ENCODE measurements at regions of chr11 and their contacts with region 1.

Region 1: DNA sequence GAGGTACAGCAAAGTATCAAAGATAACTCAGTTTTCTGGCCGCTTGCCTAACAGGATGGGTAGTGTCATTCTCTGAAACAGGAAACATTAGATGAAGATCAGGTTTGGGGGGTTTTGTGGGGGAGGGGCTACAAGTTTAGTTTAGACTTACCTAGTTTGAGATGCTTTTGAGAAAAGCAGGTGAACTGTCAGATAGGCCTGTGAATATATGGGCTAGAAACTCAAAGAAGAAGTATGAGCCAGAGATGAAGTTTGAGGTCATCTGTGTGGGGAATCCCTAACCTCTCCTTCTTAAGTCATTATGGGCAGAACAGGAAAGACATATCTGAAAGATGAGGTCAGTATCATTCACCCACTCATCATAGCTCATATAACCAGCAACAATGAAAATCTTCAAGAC is 11.9 kb downstream of the HOATZ start:
- DNase-seq: peak in 5 of 9 experiments; percentile 23 to 79 (median 45)
- ATAC-seq: peak; percentile 64
- H3K4me3 ChIP-seq: no peak overlapping the region
- H3K4me3 Mint-ChIP-seq: no peak overlapping the region
- H3K27ac ChIP-seq: no peak overlapping the region
- H3K27ac Mint-ChIP-seq: peak overlapping the region; percentile 30
- H3K4me1 ChIP-seq: peaks cover 27% of the 10 kb centered on the region
- H3K4me1 Mint-ChIP-seq: peaks cover 24% of the 10 kb centered on the region
- H3K27me3 ChIP-seq: no peaks in the 10 kb centered on the region
- H3K27me3 Mint-ChIP-seq: peaks cover 7% of the 10 kb centered on the region
- CTCF ChIP-seq: no peak

Region 2: GRCh38 chr11:111512296-111513239 is 13.9 kb before region 1 on chr11 and contains the start of gene BTG4:
- CTCF ChIA-PET with region 1: interaction called, 3 read pairs
- POLR2A ChIA-PET with region 1: no interaction called
- intact Hi-C with region 1: loop called in 1 of 2 experiments (anchors 2 kb)
- DNase-seq: peak in 5 of 9 experiments; percentile 14 to 35 (median 21)
- ATAC-seq: peak; percentile 53
- H3K4me3 ChIP-seq: peak within 1 kb of the TSS in 1 of 2 experiments; percentile 24
- H3K4me3 Mint-ChIP-seq: peak within 1 kb of the TSS; percentile 74
- H3K27ac ChIP-seq: no peak within 1 kb of the TSS
- H3K27ac Mint-ChIP-seq: no peak within 1 kb of the TSS
- H3K4me1 ChIP-seq: peaks cover 11% of the 10 kb centered on the region
- H3K4me1 Mint-ChIP-seq: peaks cover 16% of the 10 kb centered on the region
- H3K27me3 ChIP-seq: peaks cover 0 to 16% of the 10 kb centered on the region in 2 experiments
- H3K27me3 Mint-ChIP-seq: peaks cover 42% of the 10 kb centered on the region
- CTCF ChIP-seq: no peak
- total RNA-seq, gene BTG4: not detected

Region 3: DNA sequence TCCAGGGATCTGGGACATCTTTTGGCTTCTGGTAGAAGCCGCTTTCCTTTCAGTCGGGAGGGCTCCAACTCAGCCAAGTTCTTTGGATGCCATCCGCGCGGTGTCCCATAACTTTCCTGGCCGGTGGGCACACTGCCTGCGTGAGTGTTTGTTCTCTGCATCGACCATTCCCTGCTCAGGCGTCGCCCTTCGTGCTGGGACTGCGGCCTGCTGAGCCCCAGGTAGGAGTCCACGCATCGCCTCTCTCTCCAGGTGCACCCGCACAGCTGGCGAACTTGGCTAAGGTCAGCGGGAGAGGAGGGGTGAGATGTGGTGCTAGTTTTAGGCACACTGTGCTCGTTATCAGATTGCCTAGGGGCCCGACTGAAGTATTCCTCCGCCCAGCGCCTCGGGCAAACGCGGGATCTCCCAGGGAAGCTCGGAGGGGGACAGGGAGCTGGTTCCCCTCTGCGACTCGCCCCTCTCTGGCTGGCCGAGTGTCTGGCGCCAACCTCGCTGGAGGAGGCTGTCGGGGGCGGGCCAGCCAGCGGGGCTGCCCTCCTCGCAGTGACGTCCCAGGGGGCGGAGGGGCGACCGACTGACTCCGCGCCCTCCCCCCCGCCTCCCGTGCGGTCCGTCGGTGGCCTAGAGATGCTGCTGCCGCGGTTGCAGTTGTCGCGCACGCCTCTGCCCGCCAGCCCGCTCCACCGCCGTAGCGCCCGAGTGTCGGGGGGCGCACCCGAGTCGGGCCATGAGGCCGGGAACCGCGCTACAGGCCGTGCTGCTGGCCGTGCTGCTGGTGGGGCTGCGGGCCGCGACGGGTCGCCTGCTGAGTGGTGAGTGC is 13.8 kb after region 1 on chr11 and contains the start of gene LAYN:
- CTCF ChIA-PET with region 1: no interaction called
- POLR2A ChIA-PET with region 1: interaction called, 4 read pairs
- intact Hi-C with region 1: loop called in 1 of 2 experiments (anchors 1 kb)
- DNase-seq: peak; percentile 18 to 70 (median 59)
- ATAC-seq: peak; percentile 32
- H3K4me3 ChIP-seq: peak within 1 kb of the TSS; percentile 49 to 55
- H3K4me3 Mint-ChIP-seq: peak within 1 kb of the TSS; percentile 82
- H3K27ac ChIP-seq: peak within 1 kb of the TSS; percentile 9 to 17
- H3K27ac Mint-ChIP-seq: peak within 1 kb of the TSS; percentile 88
- H3K4me1 ChIP-seq: peaks cover 37% of the 10 kb centered on the region
- H3K4me1 Mint-ChIP-seq: peaks cover 38% of the 10 kb centered on the region
- H3K27me3 ChIP-seq: peaks cover 0 to 18% of the 10 kb centered on the region in 2 experiments
- H3K27me3 Mint-ChIP-seq: peaks cover 27% of the 10 kb centered on the region
- CTCF ChIP-seq: no peak
- total RNA-seq, gene LAYN: 9.5 to 11.2 TPM

Region 4: GRCh38 chr11:111623527-111624030 is 97.1 kb after region 1 on chr11:
- CTCF ChIA-PET with region 1: no interaction called
- POLR2A ChIA-PET with region 1: no interaction called
- intact Hi-C with region 1: no loop called
- DNase-seq: no peak
- ATAC-seq: no peak
- H3K4me3 ChIP-seq: no peak overlapping the region
- H3K4me3 Mint-ChIP-seq: no peak overlapping the region
- H3K27ac ChIP-seq: no peak overlapping the region
- H3K27ac Mint-ChIP-seq: no peak overlapping the region
- H3K4me1 ChIP-seq: no peaks in the 10 kb centered on the region
- H3K4me1 Mint-ChIP-seq: no peaks in the 10 kb centered on the region
- H3K27me3 ChIP-seq: no peaks in the 10 kb centered on the region
- H3K27me3 Mint-ChIP-seq: no peaks in the 10 kb centered on the region
- CTCF ChIP-seq: no peak

Region 5: GRCh38 chr11:112004389-112004788 is 477.9 kb after region 1 on chr11:
- CTCF ChIA-PET with region 1: no interaction called
- POLR2A ChIA-PET with region 1: no interaction called
- intact Hi-C with region 1: no loop called
- DNase-seq: peak in 4 of 9 experiments; percentile 11 to 39 (median 18)
- ATAC-seq: peak; percentile 74
- H3K4me3 ChIP-seq: no peak overlapping the region
- H3K4me3 Mint-ChIP-seq: no peak overlapping the region
- H3K27ac ChIP-seq: no peak overlapping the region
- H3K27ac Mint-ChIP-seq: no peak overlapping the region
- H3K4me1 ChIP-seq: no peaks in the 10 kb centered on the region
- H3K4me1 Mint-ChIP-seq: no peaks in the 10 kb centered on the region
- H3K27me3 ChIP-seq: no peaks in the 10 kb centered on the region
- H3K27me3 Mint-ChIP-seq: peaks cover 21% of the 10 kb centered on the region
- CTCF ChIP-seq: peak; percentile 45